ENCODE measurements at regions of chr15 and their contacts with region 1.

Region 1: DNA sequence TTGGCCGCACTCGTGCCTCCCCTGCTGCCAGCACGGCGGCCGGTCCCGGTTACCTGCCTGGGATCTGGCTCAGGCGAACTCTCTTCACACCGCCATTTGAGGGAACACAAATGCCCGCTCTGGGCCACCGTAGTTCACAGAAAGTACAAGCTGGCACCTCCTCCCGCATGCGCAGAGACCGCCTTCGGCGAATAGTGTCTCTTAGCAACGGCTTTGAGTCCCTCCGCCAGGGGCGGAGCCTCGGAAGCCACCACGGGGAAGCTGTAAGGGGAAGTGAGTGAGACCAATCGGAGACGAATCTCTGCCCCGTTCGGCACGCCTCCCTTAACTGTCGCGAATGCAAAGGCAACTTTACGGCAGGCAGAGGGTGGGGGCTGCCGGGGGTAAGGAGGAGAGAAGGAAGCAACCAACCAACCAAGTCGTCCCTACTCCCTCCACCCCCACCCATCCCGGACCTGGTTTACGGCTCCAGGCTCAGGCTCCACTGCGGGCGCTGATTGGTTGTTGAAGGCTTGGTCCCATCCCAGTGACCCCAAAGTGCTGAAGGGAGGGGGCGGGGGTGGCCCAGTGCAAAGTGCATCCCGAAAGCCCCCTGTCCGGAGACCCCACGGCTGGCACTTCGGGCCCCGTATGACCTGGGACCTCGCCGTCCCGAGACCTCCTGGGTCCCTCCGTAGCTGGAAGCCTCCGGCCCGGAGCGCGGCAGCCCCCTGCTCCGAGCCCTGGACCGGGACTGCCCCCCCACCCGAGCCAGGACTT is at the starts of genes ASB7 and LINS1:
- DNase-seq: peak; percentile 100
- H3K4me3 Mint-ChIP-seq: no peak within 1 kb of the TSS
- H3K27ac Mint-ChIP-seq: peak within 1 kb of the TSS; percentile 99
- H3K4me1 Mint-ChIP-seq: peaks cover 47% of the 10 kb centered on the region
- H3K27me3 Mint-ChIP-seq: no peaks in the 10 kb centered on the region
- total RNA-seq, gene ASB7: 18.3 and 18.7 TPM in 2 replicates
- total RNA-seq, gene LINS1: 64.1 and 70.5 TPM in 2 replicates

Region 2: DNA sequence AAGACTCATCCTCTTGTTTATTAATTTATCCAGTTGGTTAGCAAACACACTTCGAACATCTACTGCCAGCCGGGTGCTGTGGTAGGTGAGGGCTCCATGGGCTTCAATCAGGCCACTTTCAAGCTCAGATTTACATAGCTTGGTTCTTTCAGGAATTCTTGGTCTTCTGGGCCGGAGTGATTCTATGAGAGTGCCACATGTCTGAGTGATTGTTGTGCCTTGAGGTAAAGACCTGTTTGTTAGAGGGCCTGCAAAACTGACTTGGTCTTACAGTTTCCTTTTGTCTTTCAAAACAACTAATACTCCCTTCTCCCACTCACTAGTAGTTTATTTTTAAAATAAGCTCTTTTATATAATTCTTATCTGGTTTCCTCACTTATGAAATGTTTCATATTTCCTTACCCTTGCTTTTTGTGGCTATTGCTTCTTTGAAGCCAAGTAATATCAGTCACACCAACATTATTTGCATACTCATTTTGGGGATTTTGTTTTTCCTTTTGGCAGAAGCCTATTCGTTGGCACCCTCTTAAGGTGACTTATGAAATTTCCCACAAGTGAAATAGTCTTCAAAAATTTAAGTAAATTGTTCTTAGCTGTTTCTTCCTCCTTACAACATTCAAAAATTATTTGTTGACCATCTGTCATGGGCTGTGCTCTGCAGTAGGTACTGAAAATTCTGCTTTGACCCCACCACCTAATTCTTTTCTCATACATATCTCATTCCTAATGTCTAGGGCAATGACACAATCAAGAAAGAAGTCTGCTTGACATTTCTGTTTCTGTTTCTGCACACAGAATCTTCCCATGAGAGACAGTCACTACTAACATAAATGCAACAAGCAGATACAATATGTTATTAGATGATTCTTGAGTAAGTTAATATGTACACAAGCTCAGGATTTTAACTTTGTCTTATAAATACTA is 1230.8 kb before region 1 on chr15:
- intact Hi-C with region 1: loop called (anchors 10 kb)
- DNase-seq: no peak
- H3K4me3 Mint-ChIP-seq: peak overlapping the region; percentile 20
- H3K27ac Mint-ChIP-seq: peak overlapping the region; percentile 69
- H3K4me1 Mint-ChIP-seq: peaks cover 29% of the 10 kb centered on the region
- H3K27me3 Mint-ChIP-seq: no peaks in the 10 kb centered on the region

Region 3: DNA sequence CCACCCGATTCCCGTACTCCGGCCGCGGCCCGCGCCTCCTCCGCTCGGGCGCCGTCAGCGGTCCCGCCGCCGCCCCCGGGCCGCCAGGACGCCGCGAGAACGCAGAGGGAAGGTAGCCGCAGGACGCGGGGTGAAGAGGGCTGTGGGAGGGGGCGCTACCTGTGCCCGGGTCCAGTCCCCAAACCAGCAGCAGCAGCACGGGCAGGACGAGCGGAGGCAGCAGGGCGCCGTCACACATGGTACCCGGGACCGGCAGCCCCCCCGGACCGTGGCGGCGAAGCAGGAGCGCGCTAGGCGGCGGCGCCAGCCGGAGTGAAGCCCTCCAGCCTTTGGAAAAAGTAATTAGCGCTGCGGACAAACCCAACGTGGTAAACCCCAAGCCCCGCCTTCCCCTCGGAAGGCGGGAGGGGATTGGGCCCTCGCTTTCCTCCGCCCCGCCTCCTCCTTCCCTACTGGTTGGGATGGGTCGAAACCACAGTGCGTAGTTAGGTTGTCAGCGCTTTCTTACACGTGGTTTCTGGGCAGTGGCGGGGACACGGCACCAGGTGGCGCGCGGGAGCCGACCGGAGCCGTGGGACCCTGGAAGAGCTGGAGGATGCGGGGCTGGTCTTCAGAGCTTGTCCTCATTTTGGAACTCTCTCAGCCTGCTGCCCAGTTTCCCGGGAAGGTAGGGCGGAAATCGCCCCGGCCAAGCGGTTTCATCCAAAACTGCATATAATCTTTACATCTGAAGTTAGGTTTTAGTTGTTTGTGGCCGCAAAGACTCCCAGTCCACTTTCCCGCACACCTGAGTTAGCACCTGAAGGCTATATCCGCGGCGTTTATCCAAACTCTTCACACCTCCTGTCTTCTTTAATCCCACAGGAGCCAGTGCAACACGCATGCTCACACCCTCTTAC is 260.3 kb before region 1 on chr15 and contains the start of gene ADAMTS17:
- intact Hi-C with region 1: loop called (anchors 1 kb)
- DNase-seq: peak; percentile 90
- H3K4me3 Mint-ChIP-seq: peak within 1 kb of the TSS; percentile 59
- H3K27ac Mint-ChIP-seq: no peak within 1 kb of the TSS
- H3K4me1 Mint-ChIP-seq: no peaks in the 10 kb centered on the region
- H3K27me3 Mint-ChIP-seq: peaks cover 40% of the 10 kb centered on the region
- total RNA-seq, gene ADAMTS17: 0.83 and 1.3 TPM in 2 replicates

Region 4: DNA sequence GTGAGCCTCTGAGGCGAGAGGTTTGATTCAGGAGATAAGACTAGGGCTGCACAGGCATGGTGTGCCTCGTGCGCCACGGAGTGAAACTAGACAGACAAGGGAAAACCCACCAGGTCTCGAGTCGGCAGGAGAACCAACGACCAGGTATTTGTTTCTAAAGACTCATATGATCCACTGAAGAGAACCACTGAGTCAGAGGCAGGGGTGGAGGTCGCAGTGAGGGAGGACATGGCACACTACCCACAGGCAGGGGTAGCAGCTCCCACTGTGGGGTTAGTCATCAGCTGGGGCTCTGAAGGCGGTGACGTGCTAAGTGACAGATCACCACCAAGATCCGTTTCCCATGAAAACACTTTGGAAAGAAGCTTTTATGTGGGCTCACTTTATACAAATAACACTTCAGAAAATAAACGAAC is 603.9 kb after region 1 on chr15:
- intact Hi-C with region 1: loop called (anchors 2 kb)
- DNase-seq: peak; percentile 68
- H3K4me3 Mint-ChIP-seq: peak overlapping the region; percentile 86
- H3K27ac Mint-ChIP-seq: peak overlapping the region; percentile 97
- H3K4me1 Mint-ChIP-seq: peaks cover 89% of the 10 kb centered on the region
- H3K27me3 Mint-ChIP-seq: no peaks in the 10 kb centered on the region

Region 5: DNA sequence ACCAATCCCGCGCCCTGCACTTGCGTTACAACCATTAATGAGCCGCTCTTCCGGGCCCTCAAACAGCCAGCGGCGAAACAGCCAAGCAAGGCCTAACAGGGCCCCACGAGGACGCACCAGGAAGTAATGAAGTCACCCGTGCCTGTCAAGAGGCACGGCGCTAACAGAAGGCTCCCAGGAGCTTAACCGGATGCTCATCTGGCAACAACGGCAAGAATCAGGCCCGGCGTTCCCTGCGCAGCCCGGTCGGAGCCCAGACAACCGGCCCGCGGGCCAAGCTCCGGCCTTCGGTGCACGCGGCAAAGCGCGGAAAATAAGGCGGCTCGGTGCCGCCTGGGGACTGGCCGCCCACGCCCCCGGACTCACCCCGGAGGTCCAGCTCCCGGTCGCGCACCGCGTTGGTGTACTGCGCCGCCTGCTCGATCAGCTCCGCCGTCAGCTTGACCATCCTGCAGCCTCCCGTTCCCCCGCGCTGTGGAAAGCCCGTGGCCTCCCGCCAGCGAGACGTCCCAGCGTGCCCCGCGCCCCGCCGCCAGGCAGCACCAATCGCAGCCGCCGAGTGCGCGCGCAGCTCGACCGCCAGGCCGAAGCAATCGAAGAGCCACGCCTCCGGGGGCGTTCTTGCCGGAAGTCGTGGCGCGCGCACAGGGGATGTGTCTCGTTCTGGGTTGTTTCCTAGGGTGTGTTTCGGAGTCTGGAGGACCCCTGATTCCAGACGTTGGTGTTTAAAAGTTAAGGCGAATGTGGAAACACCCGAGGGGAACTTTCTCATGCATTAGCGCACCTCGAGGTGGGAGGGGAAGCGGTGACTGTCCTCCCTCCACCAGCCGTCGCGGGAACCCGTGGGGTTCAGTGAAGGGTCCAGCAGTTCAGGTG is 692.7 kb after region 1 on chr15 and contains the start of gene SNRPA1:
- intact Hi-C with region 1: loop called (anchors 2 kb)
- DNase-seq: peak; percentile 97
- H3K4me3 Mint-ChIP-seq: peak within 1 kb of the TSS; percentile 100
- H3K27ac Mint-ChIP-seq: peak within 1 kb of the TSS; percentile 100
- H3K4me1 Mint-ChIP-seq: peaks cover 45% of the 10 kb centered on the region
- H3K27me3 Mint-ChIP-seq: peaks cover 2% of the 10 kb centered on the region
- total RNA-seq, gene SNRPA1: 176 and 184 TPM in 2 replicates

Measured in activated T-helper 1 cell treated with anti-CD3 and anti-CD28 coated beads, Interleukin-12 subunit alpha, Interleukin-12 subunit beta, Interleukin-2, Interleukin-4 antibody, amounts not matched to agents 30 ng/mL and 10 ng/mL and 1 ng/mL, durations not matched to agents 14 hours and 24 hours and 36 hours (primary cell).